IMR-90 (cell line): ENCODE measurements at regions of chr4 and their contacts with region 1.

Region 1: DNA sequence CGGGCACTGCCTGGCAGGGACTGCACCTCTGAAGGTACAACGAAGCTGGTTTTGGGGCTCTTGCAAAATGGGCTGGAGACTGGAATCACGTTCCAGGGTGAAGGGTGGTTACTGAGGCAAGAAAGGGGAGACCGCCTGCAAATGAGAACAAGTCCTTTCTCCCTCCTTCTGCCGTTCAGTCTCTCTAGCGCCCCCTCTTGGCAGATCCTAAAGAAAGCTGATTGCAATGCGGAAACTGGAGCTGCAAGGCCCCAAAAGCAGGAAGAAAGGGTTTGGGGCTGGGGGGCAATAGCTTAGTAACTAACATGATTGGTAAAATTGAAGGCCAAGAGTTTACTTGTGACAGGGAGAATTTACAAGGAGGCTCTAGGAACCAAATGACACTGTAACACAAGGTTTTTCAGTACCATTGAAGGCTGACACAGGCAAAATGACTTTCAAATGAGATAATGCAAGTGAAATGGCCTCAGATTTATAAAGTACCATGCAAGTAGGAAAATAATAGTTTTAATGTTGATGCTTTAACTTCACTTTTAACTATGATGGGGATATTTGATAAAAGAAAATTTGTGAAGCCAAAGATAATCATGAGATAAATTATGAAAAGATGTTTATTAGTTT is 222.7 kb upstream of the HAND2 start:
- DNase-seq: peak; percentile 4
- ATAC-seq: no peak
- H3K4me3 ChIP-seq: no peak overlapping the region
- H3K27ac ChIP-seq: no peak overlapping the region
- H3K4me1 ChIP-seq: no peaks in the 10 kb centered on the region
- H3K27me3 ChIP-seq: no peaks in the 10 kb centered on the region
- CTCF ChIP-seq: 0 out of 2 replicates have a peak, but pooled peaks have one; percentile 18
- POLR2A ChIP-seq: no peak
- RAD21 ChIP-seq: no peak

Region 2: DNA sequence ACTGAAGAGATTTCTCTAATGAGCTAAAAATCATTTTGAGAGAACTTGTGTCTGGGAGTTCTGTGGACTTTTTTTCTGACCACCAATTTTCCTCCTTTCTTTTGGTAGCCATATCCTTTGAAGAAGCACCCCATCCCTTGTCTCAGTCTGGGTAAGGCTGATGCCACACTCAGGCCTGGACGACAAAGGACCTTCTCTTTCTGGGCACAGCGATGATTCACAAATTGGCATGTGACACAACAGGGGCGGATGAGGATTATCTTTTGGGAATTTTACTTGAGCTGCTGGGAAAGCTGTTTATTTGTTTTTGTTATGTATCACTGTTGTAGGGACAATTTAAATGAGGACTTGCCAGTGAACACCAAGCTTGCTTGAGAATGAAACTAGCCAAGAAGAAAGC is 10.7 kb after region 1 on chr4:
- CTCF ChIA-PET with region 1: interaction called, 11 read pairs
- POLR2A ChIA-PET with region 1: no interaction called
- dilution Hi-C with region 1: no loop called
- in situ Hi-C with region 1: no loop called
- intact Hi-C with region 1: no loop called
- DNase-seq: no peak
- ATAC-seq: no peak
- H3K4me3 ChIP-seq: no peak overlapping the region
- H3K27ac ChIP-seq: no peak overlapping the region
- H3K4me1 ChIP-seq: peaks cover 2% of the 10 kb centered on the region; the same call in 1 of the 2 replicates
- H3K27me3 ChIP-seq: no peaks in the 10 kb centered on the region
- CTCF ChIP-seq: no peak
- POLR2A ChIP-seq: no peak
- RAD21 ChIP-seq: no peak

Region 3: DNA sequence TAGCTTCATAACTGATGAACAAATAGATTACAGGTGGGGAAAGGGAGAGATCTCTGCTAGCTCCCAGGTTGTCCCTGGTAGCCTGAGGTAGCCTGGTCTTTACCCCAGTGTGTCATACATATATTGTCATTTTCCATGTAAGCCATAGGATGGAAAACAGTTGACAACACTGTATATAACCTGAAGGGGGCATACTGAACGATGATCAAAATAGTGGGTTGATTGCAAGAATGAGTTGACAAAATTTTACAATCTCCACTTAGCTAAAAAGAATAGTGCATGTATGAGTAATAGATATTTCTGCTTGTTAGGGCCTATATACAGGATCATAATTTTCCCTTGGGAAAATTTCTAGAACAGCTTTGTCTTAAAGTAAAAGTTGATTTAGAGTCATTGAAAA is 81.4 kb after region 1 on chr4:
- CTCF ChIA-PET with region 1: no interaction called
- POLR2A ChIA-PET with region 1: no interaction called
- dilution Hi-C with region 1: no loop called
- in situ Hi-C with region 1: no loop called
- intact Hi-C with region 1: no loop called
- DNase-seq: peak; percentile 7
- ATAC-seq: no peak
- H3K4me3 ChIP-seq: no peak overlapping the region
- H3K27ac ChIP-seq: no peak overlapping the region
- H3K4me1 ChIP-seq: no peaks in the 10 kb centered on the region
- H3K27me3 ChIP-seq: no peaks in the 10 kb centered on the region
- CTCF ChIP-seq: 0 out of 2 replicates have a peak, but pooled peaks have one; percentile 6
- POLR2A ChIP-seq: no peak
- RAD21 ChIP-seq: no peak

Region 4: DNA sequence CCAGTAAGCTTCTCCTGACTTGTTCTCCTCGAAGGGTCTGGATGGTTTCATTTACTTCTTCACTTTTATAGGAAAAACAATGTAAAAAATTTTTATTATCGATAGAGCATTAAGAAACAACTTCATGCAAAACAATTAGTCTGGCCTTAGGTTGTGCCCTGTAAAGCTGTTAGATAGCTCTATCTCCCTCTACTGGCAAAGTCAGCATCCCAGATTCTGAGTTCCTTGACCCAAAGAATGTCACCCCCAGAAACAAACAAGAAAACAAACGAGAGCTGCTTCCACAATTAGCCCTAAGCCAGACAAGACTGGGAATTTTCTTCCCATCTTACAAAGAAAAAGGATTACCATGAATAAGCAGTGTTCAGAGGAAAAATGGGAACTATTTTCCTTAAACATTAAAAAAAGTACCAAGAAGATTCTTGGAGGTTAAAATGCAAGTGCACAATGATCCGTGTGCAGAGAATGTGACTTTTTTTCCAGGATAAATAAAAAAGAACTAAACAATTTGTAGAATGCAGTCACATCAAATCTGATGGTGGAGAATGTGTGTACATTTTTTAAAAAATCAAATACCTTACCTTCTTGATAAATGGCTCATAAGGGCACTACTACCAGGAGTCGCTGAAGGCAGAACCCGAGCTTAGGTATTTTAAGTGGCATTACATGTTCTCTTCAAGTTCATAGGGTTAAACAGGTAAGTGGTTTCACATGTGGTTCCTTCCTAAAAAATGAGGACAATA is 237.6 kb after region 1 on chr4:
- CTCF ChIA-PET with region 1: no interaction called
- POLR2A ChIA-PET with region 1: no interaction called
- dilution Hi-C with region 1: no loop called
- in situ Hi-C with region 1: no loop called
- intact Hi-C with region 1: loop called (anchors 5 kb)
- DNase-seq: peak; percentile 46
- ATAC-seq: peak; percentile 83
- H3K4me3 ChIP-seq: no peak overlapping the region
- H3K27ac ChIP-seq: no peak overlapping the region
- H3K4me1 ChIP-seq: no peaks in the 10 kb centered on the region
- H3K27me3 ChIP-seq: peaks cover 2% of the 10 kb centered on the region
- CTCF ChIP-seq: peak; percentile 56
- POLR2A ChIP-seq: no peak
- RAD21 ChIP-seq: peak; percentile 69